Vagina (tissue), 2 donors: ENCODE measurements at regions of chr20 and their contacts with region 1.

Region 1: GRCh38 chr20:62409931-62410745 is 3.1 kb upstream of the CABLES2 start:
- DNase-seq: no peak
- H3K4me3 ChIP-seq: no peak overlapping the region
- H3K27ac ChIP-seq: no peak overlapping the region
- H3K4me1 ChIP-seq: peaks cover 33% of the 10 kb centered on the region
- H3K27me3 ChIP-seq: no peaks in the 10 kb centered on the region
- CTCF ChIP-seq: peak in 1 of 3 experiments; percentile 4
- POLR2A ChIP-seq: no peak

Region 2: GRCh38 chr20:62818592-62819493 is 408.7 kb after region 1 on chr20:
- intact Hi-C with region 1: loop called (anchors 10 kb)
- DNase-seq: no peak
- H3K4me3 ChIP-seq: no peak overlapping the region
- H3K27ac ChIP-seq: no peak overlapping the region
- H3K4me1 ChIP-seq: peaks cover 54% of the 10 kb centered on the region
- H3K27me3 ChIP-seq: peaks cover 13% of the 10 kb centered on the region
- CTCF ChIP-seq: no peak
- POLR2A ChIP-seq: no peak